PC-9 (cell line): ENCODE measurements at regions of chr6 and their contacts with region 1.

Region 1: DNA sequence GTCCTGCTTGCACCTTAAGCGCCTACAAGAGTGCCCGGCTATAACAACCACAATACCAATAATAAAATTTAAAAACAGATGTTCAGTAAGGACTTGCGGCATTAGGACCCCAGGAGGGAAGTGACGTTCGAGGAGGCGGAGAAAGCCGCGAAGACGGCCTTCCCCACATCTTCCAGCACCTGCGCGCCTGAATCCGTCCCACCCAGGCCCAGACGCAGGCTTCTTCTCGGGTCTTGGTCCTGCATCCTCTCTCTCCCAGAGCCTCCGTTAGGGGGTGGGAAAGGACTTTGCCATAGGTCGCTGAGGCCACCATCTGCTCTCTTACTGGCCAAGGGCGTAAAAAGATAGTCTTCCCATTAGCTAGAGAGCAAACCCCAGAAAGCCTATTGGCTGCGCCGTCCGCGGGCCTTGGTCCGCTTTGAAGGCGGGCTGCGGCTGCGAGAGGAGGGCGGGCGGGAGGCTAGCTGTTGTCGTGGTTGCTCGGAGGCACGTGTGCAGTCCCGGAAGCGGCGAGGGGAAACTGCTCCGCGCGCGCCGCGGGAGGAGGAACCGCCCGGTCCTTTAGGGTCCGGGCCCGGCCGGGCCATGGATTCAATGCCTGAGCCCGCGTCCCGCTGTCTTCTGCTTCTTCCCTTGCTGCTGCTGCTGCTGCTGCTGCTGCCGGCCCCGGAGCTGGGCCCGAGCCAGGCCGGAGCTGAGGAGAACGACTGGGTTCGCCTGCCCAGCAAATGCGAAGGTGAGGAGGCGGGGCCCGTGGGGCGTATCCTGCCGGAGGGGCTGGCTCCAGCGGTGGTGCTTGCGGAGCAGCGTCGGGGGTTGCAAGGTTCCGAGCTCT is at the start of gene CNPY3:
- DNase-seq: peak; percentile 94
- H3K4me3 ChIP-seq: peak within 1 kb of the TSS; percentile 73
- H3K27ac ChIP-seq: peak within 1 kb of the TSS; percentile 67
- H3K4me1 ChIP-seq: peaks cover 16% of the 10 kb centered on the region
- H3K27me3 ChIP-seq: no peaks in the 10 kb centered on the region
- CTCF ChIP-seq: no peak
- total RNA-seq, gene CNPY3: 47.7 and 54.8 TPM in 2 replicates

Region 2: GRCh38 chr6:42890311-42891198 is 38.6 kb before region 1 on chr6:
- CTCF ChIA-PET with region 1: no interaction called
- POLR2A ChIA-PET with region 1: interaction called, 10 read pairs
- intact Hi-C with region 1: no loop called
- DNase-seq: peak; percentile 87 to 93
- H3K4me3 ChIP-seq: peak overlapping the region; percentile 80
- H3K27ac ChIP-seq: peak overlapping the region; percentile 89
- H3K4me1 ChIP-seq: peaks cover 17% of the 10 kb centered on the region; the same call in 1 of the 2 replicates
- H3K27me3 ChIP-seq: no peaks in the 10 kb centered on the region
- CTCF ChIP-seq: no peak

Region 3: GRCh38 chr6:42984001-42984923 is 55.1 kb after region 1 on chr6 and contains the start of gene PPP2R5D:
- CTCF ChIA-PET with region 1: no interaction called
- POLR2A ChIA-PET with region 1: interaction called, 14 read pairs
- intact Hi-C with region 1: no loop called
- DNase-seq: peak; percentile 96
- H3K4me3 ChIP-seq: peak within 1 kb of the TSS; percentile 60
- H3K27ac ChIP-seq: no peak within 1 kb of the TSS
- H3K4me1 ChIP-seq: peaks cover 17% of the 10 kb centered on the region; the same call in 1 of the 2 replicates
- H3K27me3 ChIP-seq: no peaks in the 10 kb centered on the region
- CTCF ChIP-seq: no peak
- total RNA-seq, gene PPP2R5D: 42.9 and 53.7 TPM in 2 replicates

Region 4: GRCh38 chr6:43096451-43097097 is 167.4 kb after region 1 on chr6:
- CTCF ChIA-PET with region 1: no interaction called
- POLR2A ChIA-PET with region 1: interaction called, 3 read pairs
- intact Hi-C with region 1: loop called (anchors 1 kb)
- DNase-seq: peak; percentile 89 to 98
- H3K4me3 ChIP-seq: peak overlapping the region; percentile 47; the same call in 1 of the 2 replicates
- H3K27ac ChIP-seq: peak overlapping the region; percentile 89
- H3K4me1 ChIP-seq: peaks cover 60% of the 10 kb centered on the region
- H3K27me3 ChIP-seq: no peaks in the 10 kb centered on the region
- CTCF ChIP-seq: no peak; the same call in 1 of the 2 replicates

Region 5: DNA sequence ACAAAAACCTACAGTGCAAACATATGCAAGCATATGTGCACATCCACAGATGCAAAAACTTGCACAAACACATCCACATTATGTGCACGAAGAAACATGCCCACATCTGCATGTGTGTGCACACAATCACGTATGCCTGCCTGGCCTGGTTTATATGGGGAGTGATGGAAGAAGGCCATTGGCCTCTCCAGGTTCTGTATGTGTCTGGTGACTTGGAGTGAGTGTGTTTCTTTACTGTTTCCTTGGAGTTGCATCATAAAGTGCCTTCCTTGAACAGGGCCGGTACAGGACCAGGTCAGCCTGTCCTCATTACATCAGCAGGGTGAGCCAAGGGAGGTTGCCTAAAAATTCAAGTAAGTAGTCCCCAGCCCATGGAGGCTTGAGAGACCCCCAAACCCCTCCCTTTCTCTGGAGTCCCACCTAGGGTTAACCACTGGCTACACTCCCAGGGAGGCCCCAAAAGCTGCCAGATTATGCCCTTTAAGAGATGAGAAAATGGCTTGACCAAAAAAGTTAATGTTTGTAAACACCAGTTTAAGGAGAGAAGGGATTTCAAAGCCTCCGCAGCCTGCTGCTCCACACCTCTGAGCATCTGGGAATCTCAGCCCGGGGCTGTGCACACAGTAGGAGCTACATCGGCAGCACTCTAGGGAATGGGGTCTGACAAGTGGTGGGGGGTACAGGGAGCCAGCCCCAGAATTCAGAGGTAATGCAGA is 981.6 kb after region 1 on chr6:
- CTCF ChIA-PET with region 1: no interaction called
- POLR2A ChIA-PET with region 1: no interaction called
- intact Hi-C with region 1: no loop called
- DNase-seq: peak in 1 of 2 experiments; percentile 55
- H3K4me3 ChIP-seq: peak overlapping the region; percentile 42; the same call in 1 of the 2 replicates
- H3K27ac ChIP-seq: peak overlapping the region; percentile 83
- H3K4me1 ChIP-seq: peaks cover 18% of the 10 kb centered on the region
- H3K27me3 ChIP-seq: no peaks in the 10 kb centered on the region
- CTCF ChIP-seq: no peak